B cell (primary cell): ENCODE measurements at regions of chrX and their contacts with region 1.

Region 1: GRCh38 chrX:129982274-129983251 is at the start of gene BCORL1:
- DNase-seq: peak; percentile 91
- ATAC-seq: peak; percentile 88
- H3K4me3 ChIP-seq: peak within 1 kb of the TSS in 2 of 5 experiments; percentile 57 to 62
- H3K4me3 Mint-ChIP-seq: no peak within 1 kb of the TSS
- H3K27ac ChIP-seq: peak within 1 kb of the TSS in 1 of 2 donors; percentile 41
- H3K27ac Mint-ChIP-seq: peak within 1 kb of the TSS; percentile 91
- H3K4me1 ChIP-seq: peaks cover 5 to 7% of the 10 kb centered on the region in 2 donors
- H3K4me1 Mint-ChIP-seq: peaks cover 19% of the 10 kb centered on the region
- H3K27me3 ChIP-seq: no peaks in the 10 kb centered on the region
- H3K27me3 Mint-ChIP-seq: no peaks in the 10 kb centered on the region
- CTCF ChIP-seq: no peak
- total RNA-seq, gene BCORL1: 14.3 and 14.4 TPM in 2 replicates

Region 2: DNA sequence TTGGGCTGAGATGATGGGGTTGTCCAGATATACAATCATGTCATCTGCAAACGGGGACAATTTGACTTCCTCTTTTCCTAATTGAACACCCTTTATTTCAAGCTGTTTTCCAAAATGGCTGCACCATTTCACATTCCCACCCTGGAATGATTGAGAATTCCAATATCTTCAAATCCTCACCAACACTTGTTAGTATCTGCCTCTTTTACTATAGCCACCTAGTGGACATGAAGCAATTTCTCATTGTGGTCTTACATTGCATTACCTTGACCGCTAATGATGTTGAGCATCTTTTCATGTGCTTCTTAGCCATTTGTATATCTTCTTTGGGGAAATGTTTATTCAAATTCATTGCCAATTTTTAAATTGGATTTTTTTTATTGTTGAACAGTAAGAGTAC is 824.1 kb before region 1 on chrX:
- CTCF ChIA-PET with region 1: no interaction called
- POLR2A ChIA-PET with region 1: no interaction called
- intact Hi-C with region 1: no loop called
- DNase-seq: no peak
- ATAC-seq: no peak
- H3K4me3 ChIP-seq: no peak overlapping the region
- H3K4me3 Mint-ChIP-seq: no peak overlapping the region
- H3K27ac ChIP-seq: no peak overlapping the region
- H3K27ac Mint-ChIP-seq: no peak overlapping the region
- H3K4me1 ChIP-seq: no peaks in the 10 kb centered on the region
- H3K4me1 Mint-ChIP-seq: no peaks in the 10 kb centered on the region
- H3K27me3 ChIP-seq: no peaks in the 10 kb centered on the region
- H3K27me3 Mint-ChIP-seq: no peaks in the 10 kb centered on the region
- CTCF ChIP-seq: no peak

Region 3: DNA sequence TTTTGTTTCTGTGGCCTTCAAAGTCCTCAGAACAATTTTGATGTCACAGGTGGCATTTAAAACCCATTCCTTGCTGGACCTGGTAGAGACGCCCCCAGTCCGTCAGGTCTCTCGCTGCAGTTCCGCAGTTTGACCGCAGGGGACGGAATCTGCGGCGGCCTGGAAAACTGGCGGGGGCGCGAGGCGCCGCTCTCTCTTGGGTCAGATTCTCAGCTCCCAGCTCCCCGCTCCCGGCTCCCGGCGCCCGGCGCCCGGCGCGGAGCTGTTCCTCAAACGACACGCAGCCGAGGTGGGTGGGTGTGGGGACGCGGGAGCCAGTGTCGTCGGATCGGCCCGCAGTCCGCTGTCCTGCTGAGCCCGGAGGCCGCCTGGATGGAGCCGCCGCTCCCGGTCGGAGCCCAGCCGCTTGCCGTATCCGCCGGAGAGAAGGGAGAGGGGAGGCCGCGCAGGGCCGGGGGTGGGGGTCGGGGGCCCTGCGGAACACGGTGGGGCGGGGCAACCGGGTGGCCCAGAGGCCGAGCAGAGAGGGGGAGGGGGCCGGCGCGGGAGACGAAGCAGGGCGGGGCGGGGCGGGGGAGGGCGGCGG is 442.4 kb before region 1 on chrX and contains the start of gene OCRL:
- CTCF ChIA-PET with region 1: no interaction called
- POLR2A ChIA-PET with region 1: no interaction called
- intact Hi-C with region 1: no loop called
- DNase-seq: peak; percentile 69
- ATAC-seq: peak; percentile 81
- H3K4me3 ChIP-seq: peak within 1 kb of the TSS; percentile 38 to 66 (median 59)
- H3K4me3 Mint-ChIP-seq: peak within 1 kb of the TSS; percentile 72
- H3K27ac ChIP-seq: no peak within 1 kb of the TSS
- H3K27ac Mint-ChIP-seq: no peak within 1 kb of the TSS
- H3K4me1 ChIP-seq: peaks cover 3 to 5% of the 10 kb centered on the region in 2 donors
- H3K4me1 Mint-ChIP-seq: peaks cover 9% of the 10 kb centered on the region
- H3K27me3 ChIP-seq: no peaks in the 10 kb centered on the region
- H3K27me3 Mint-ChIP-seq: no peaks in the 10 kb centered on the region
- CTCF ChIP-seq: peak; percentile 58
- total RNA-seq, gene OCRL: 8.8 and 10.6 TPM in 2 replicates

Region 4: GRCh38 chrX:129678614-129679195 is 303.9 kb before region 1 on chrX:
- CTCF ChIA-PET with region 1: no interaction called
- POLR2A ChIA-PET with region 1: no interaction called
- intact Hi-C with region 1: loop called (anchors 5 kb)
- DNase-seq: no peak
- ATAC-seq: peak; percentile 28
- H3K4me3 ChIP-seq: peak overlapping the region in 4 of 5 experiments; percentile 37 to 58 (median 56)
- H3K4me3 Mint-ChIP-seq: peak overlapping the region; percentile 85
- H3K27ac ChIP-seq: peak overlapping the region; percentile 16 to 40
- H3K27ac Mint-ChIP-seq: peak overlapping the region; percentile 82
- H3K4me1 ChIP-seq: peaks cover 5 to 16% of the 10 kb centered on the region in 2 donors
- H3K4me1 Mint-ChIP-seq: peaks cover 12% of the 10 kb centered on the region
- H3K27me3 ChIP-seq: no peaks in the 10 kb centered on the region
- H3K27me3 Mint-ChIP-seq: no peaks in the 10 kb centered on the region
- CTCF ChIP-seq: no peak

Region 5: GRCh38 chrX:129843459-129844306 is 138.9 kb before region 1 on chrX and contains the start of gene ZDHHC9:
- CTCF ChIA-PET with region 1: no interaction called
- POLR2A ChIA-PET with region 1: no interaction called
- intact Hi-C with region 1: loop called (anchors 5 kb)
- DNase-seq: peak; percentile 89
- ATAC-seq: peak; percentile 99
- H3K4me3 ChIP-seq: peak within 1 kb of the TSS; percentile 8 to 75 (median 72)
- H3K4me3 Mint-ChIP-seq: peak within 1 kb of the TSS; percentile 94
- H3K27ac ChIP-seq: peak within 1 kb of the TSS in 1 of 2 donors; percentile 54
- H3K27ac Mint-ChIP-seq: peak within 1 kb of the TSS; percentile 87
- H3K4me1 ChIP-seq: peaks cover 4 to 11% of the 10 kb centered on the region in 2 donors
- H3K4me1 Mint-ChIP-seq: peaks cover 19% of the 10 kb centered on the region
- H3K27me3 ChIP-seq: peaks cover 0 to 3% (median 0%) of the 10 kb centered on the region in 4 experiments
- H3K27me3 Mint-ChIP-seq: no peaks in the 10 kb centered on the region
- CTCF ChIP-seq: no peak
- total RNA-seq, gene ZDHHC9: 4.5 and 6.1 TPM in 2 replicates

Region 6: GRCh38 chrX:129905787-129906580 is 76.6 kb before region 1 on chrX and contains the start of gene UTP14A:
- CTCF ChIA-PET with region 1: no interaction called
- POLR2A ChIA-PET with region 1: no interaction called
- intact Hi-C with region 1: loop called (anchors 1 kb)
- DNase-seq: peak; percentile 87
- ATAC-seq: peak; percentile 95
- H3K4me3 ChIP-seq: peak within 1 kb of the TSS; percentile 66 to 81 (median 76)
- H3K4me3 Mint-ChIP-seq: peak within 1 kb of the TSS; percentile 94
- H3K27ac ChIP-seq: peak within 1 kb of the TSS; percentile 53 to 69
- H3K27ac Mint-ChIP-seq: peak within 1 kb of the TSS; percentile 93
- H3K4me1 ChIP-seq: peaks cover 4 to 12% of the 10 kb centered on the region in 2 donors
- H3K4me1 Mint-ChIP-seq: peaks cover 9% of the 10 kb centered on the region
- H3K27me3 ChIP-seq: no peaks in the 10 kb centered on the region
- H3K27me3 Mint-ChIP-seq: no peaks in the 10 kb centered on the region
- CTCF ChIP-seq: no peak
- total RNA-seq, gene UTP14A: 21.5 and 23.0 TPM in 2 replicates

Region 7: GRCh38 chrX:129931411-129932015 is 51.0 kb before region 1 on chrX:
- CTCF ChIA-PET with region 1: interaction called, 3 read pairs
- POLR2A ChIA-PET with region 1: interaction called, 18 read pairs
- intact Hi-C with region 1: loop called (anchors 1 kb)
- DNase-seq: peak; percentile 89
- ATAC-seq: peak; percentile 75
- H3K4me3 ChIP-seq: peak overlapping the region in 4 of 5 experiments; percentile 65 to 72 (median 71)
- H3K4me3 Mint-ChIP-seq: peak overlapping the region; percentile 90
- H3K27ac ChIP-seq: peak overlapping the region; percentile 80 to 82
- H3K27ac Mint-ChIP-seq: peak overlapping the region; percentile 98
- H3K4me1 ChIP-seq: peaks cover 0 to 5% of the 10 kb centered on the region in 2 donors
- H3K4me1 Mint-ChIP-seq: peaks cover 8% of the 10 kb centered on the region
- H3K27me3 ChIP-seq: no peaks in the 10 kb centered on the region
- H3K27me3 Mint-ChIP-seq: no peaks in the 10 kb centered on the region
- CTCF ChIP-seq: no peak

Region 8: GRCh38 chrX:129957241-129958082 is 25.1 kb before region 1 on chrX:
- CTCF ChIA-PET with region 1: interaction called, 4 read pairs
- POLR2A ChIA-PET with region 1: interaction called, 4 read pairs
- intact Hi-C with region 1: loop called (anchors 1 kb)
- DNase-seq: peak; percentile 77
- ATAC-seq: peak; percentile 79
- H3K4me3 ChIP-seq: peak overlapping the region in 4 of 5 experiments; percentile 43 to 56 (median 51)
- H3K4me3 Mint-ChIP-seq: peak overlapping the region; percentile 78
- H3K27ac ChIP-seq: peak overlapping the region; percentile 33 to 67
- H3K27ac Mint-ChIP-seq: peak overlapping the region; percentile 78
- H3K4me1 ChIP-seq: peaks cover 13 to 40% of the 10 kb centered on the region in 2 donors
- H3K4me1 Mint-ChIP-seq: peaks cover 41% of the 10 kb centered on the region
- H3K27me3 ChIP-seq: no peaks in the 10 kb centered on the region
- H3K27me3 Mint-ChIP-seq: no peaks in the 10 kb centered on the region
- CTCF ChIP-seq: no peak

Region 9: DNA sequence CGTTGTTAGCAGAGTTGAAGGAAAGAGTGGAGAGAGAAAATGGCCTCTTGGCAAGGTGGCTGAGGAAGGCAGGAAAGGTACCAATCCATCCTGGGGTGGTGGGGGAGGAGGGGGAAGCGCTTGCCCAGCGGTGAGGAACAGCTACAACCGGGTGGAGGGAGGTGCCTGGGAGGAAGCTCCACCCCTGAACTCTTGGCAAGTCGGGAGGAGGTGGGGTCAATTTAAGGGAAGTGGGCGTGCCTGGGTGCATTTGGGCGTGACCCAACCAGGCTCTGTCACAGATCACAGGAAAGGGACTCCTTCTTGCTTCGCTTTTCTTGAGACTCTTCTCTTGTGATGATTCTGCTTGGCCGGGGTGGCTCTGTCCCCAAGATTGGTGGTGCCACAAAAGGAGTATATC is 41.6 kb after region 1 on chrX:
- CTCF ChIA-PET with region 1: interaction called, 5 read pairs
- POLR2A ChIA-PET with region 1: no interaction called
- intact Hi-C with region 1: loop called (anchors 2 kb)
- DNase-seq: peak; percentile 90
- ATAC-seq: peak; percentile 100
- H3K4me3 ChIP-seq: peak overlapping the region in 1 of 5 experiments; percentile 13
- H3K4me3 Mint-ChIP-seq: peak overlapping the region; percentile 76
- H3K27ac ChIP-seq: peak overlapping the region; percentile 29 to 68
- H3K27ac Mint-ChIP-seq: peak overlapping the region; percentile 89
- H3K4me1 ChIP-seq: peaks cover 13 to 20% of the 10 kb centered on the region in 2 donors
- H3K4me1 Mint-ChIP-seq: peaks cover 15% of the 10 kb centered on the region
- H3K27me3 ChIP-seq: no peaks in the 10 kb centered on the region
- H3K27me3 Mint-ChIP-seq: no peaks in the 10 kb centered on the region
- CTCF ChIP-seq: no peak

Region 10: DNA sequence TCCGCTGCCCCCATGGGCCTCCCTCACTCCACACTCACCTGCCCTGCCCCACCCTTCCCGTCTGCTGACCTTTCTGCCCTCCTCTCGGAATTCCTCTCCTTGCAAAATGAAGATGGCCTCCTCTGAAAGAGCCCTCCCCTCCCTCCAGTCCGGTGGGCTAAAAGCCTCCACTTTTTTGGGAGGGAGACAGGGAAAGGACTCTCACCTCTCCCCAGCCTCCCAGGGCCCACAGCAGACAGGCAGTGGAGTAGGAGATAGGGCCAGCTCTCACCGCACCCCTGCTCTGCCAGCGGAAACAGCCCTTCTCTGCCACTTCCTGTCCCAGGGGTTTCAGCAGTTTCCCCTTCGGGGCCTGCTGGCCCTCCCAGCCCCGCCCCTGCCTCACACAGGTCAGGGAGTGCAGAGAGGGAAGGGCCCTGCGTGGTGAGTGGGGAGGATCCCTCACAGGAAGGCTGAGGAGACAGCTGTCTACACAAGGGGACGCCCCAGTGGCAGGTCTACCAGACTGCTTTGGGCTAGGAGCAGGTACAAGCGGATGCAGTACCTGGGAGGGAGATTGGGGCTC is 109.5 kb after region 1 on chrX:
- CTCF ChIA-PET with region 1: no interaction called
- POLR2A ChIA-PET with region 1: no interaction called
- intact Hi-C with region 1: no loop called
- DNase-seq: peak; percentile 92
- ATAC-seq: peak; percentile 96
- H3K4me3 ChIP-seq: peak overlapping the region; percentile 1 to 64 (median 49)
- H3K4me3 Mint-ChIP-seq: peak overlapping the region; percentile 88
- H3K27ac ChIP-seq: peak overlapping the region; percentile 75 to 81
- H3K27ac Mint-ChIP-seq: peak overlapping the region; percentile 95
- H3K4me1 ChIP-seq: peaks cover 44 to 70% of the 10 kb centered on the region in 2 donors
- H3K4me1 Mint-ChIP-seq: peaks cover 55% of the 10 kb centered on the region
- H3K27me3 ChIP-seq: no peaks in the 10 kb centered on the region
- H3K27me3 Mint-ChIP-seq: no peaks in the 10 kb centered on the region
- CTCF ChIP-seq: peak; percentile 14